ENCODE measurements at regions of chr16 and their contacts with region 1.

Region 1: GRCh38 chr16:75264996-75265844 is 13.8 kb upstream of the BCAR1 start:
- DNase-seq: peak; percentile 67
- ATAC-seq: peak; percentile 44

Region 2: GRCh38 chr16:74591876-74592614 is 673.2 kb before region 1 on chr16:
- intact Hi-C with region 1: no loop called
- DNase-seq: no peak
- ATAC-seq: no peak

Region 3: DNA sequence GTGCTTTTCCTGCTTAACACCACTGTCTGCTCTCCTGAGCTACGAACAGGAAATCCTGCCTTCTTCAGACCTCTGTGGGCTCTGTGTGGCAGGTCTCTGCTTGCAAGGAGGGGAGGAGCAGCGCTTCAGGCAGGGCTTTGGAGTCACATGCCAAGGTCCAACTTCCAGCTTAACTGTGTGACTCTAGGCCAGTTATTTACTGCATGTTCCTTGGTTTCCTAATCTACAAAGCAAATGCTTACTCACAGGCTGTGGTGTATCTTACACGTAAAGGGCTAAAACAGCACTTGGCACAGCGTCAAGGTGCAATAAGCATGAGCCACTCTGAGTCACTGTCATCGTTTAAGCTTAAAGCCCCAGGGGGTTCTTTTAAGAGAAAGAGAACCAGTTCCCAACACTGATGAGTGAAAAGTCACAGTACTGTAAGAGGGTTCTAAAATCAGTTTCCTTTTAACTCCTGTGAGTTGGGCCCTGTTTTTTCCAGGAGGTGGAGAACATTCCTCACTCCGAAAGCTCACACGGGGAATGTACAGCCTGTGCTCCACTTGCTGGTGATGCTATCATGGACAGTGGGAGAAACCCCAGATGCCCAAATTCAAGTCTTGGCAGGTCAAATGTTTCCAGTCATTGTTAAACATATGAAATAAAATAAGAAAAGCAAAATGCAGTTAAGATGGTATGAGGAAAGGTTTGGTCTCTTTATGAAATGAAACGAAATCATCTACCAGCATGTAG is 40.3 kb after region 1 on chr16:
- intact Hi-C with region 1: loop called (anchors 5 kb)
- DNase-seq: peak; percentile 59
- ATAC-seq: peak; percentile 91

Measured in Right ventricle myocardium superior (tissue), 1 donor.